ENCODE measurements at regions of chr7 and their contacts with region 1.

Region 1: GRCh38 chr7:100563809-100564400 is 9.8 kb downstream of the SAP25 start:
- DNase-seq: peak; percentile 65 to 98
- H3K4me3 ChIP-seq: no peak overlapping the region
- H3K27ac ChIP-seq: no peak overlapping the region
- H3K4me1 ChIP-seq: peaks cover 0 to 18% (median 8%) of the 10 kb centered on the region in 4 experiments; a peak in 6 of 7 replicates
- H3K27me3 ChIP-seq: no peaks in the 10 kb centered on the region
- CTCF ChIP-seq: peak in 2 of 3 experiments; percentile 82 to 96; a peak in 3 of 4 replicates
- EP300 ChIP-seq: no peak
- POLR2A ChIP-seq: no peak
- RAD21 ChIP-seq: peak; percentile 74 to 76

Region 2: DNA sequence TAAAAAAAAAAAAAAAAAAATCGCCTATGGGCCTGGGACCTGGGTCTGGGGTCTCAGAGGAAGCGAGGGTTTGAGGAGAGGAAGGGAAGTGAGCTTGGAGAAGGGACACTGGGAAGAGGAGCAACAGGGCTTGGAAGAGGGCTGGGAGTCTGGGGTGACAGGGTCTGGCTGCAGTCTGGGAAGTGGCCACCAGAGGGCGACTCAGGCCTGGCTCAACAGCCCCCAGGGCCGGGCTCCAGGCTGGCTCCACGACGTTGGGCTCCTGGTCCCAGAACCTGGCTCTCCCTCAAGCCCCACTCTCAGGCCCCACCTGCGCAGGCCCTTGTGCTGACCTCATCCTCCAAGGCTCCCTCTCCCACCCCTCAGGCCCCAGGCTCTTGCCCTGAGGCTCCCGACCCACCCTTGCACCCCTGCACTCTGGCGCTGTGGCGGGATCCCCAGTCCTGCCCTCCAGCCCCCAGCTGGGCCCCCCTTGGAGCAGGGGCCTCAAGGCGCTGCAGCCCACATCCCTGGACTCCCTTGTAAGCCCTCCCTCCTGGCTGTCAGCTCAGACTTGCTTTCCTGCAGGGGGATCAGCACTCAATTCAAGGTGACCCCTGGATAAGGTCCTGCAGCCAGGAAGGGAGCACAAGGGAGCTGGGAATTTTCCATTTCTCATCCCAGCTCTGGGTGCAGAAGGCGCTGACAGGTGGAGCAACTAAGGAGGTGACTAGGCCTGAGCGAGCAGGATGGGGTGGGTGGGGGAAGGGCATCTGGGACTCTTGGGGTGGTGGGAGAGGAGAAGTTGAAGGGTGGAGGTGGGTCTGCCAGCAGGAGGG is 94.5 kb before region 1 on chr7:
- CTCF ChIA-PET with region 1: interaction called, 149 read pairs
- POLR2A ChIA-PET with region 1: interaction called, 3 read pairs
- DNase-seq: peak in 1 of 2 experiments; percentile 99
- H3K4me3 ChIP-seq: no peak overlapping the region
- H3K27ac ChIP-seq: no peak overlapping the region
- H3K4me1 ChIP-seq: peaks cover 0 to 11% (median 4%) of the 10 kb centered on the region in 4 experiments; a peak in 6 of 7 replicates
- H3K27me3 ChIP-seq: no peaks in the 10 kb centered on the region
- CTCF ChIP-seq: peak; percentile 91 to 98 (median 97)
- EP300 ChIP-seq: no peak
- POLR2A ChIP-seq: no peak
- RAD21 ChIP-seq: peak; percentile 95 to 96

Region 3: DNA sequence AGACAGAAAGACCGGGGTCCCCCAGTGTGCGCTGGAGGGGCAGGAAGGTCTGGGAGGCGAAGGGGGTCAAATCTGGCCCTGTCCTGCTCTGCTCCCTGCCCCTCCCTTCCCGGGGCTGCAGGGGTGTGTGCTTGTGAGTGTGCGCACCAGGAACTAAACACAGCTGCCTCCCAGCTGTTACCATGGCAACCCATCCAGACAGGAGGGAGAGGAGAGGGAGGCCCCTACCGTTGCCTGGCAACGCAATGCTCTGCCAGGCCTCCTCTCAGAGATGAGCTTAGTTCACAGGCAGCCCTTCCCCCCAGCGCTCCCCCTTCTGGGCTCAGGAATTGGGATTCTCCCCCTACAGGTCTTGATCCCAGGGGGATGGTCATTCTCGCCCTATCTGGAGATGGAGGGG is 74.1 kb before region 1 on chr7:
- CTCF ChIA-PET with region 1: interaction called, 17 read pairs
- POLR2A ChIA-PET with region 1: interaction called, 7 read pairs
- DNase-seq: peak; percentile 72 to 81
- H3K4me3 ChIP-seq: no peak overlapping the region; a peak in 1 of 8 replicates
- H3K27ac ChIP-seq: no peak overlapping the region
- H3K4me1 ChIP-seq: peaks cover 2 to 26% (median 14%) of the 10 kb centered on the region in 4 experiments
- H3K27me3 ChIP-seq: peaks cover 0 to 4% (median 2%) of the 10 kb centered on the region in 4 experiments; a peak in 5 of 7 replicates
- CTCF ChIP-seq: no peak
- EP300 ChIP-seq: no peak
- POLR2A ChIP-seq: no peak
- RAD21 ChIP-seq: no peak; a peak in 1 of 4 replicates

Region 4: GRCh38 chr7:100545360-100546128 is 18.4 kb before region 1 on chr7:
- CTCF ChIA-PET with region 1: interaction called, 341 read pairs
- POLR2A ChIA-PET with region 1: interaction called, 12 read pairs
- DNase-seq: no peak
- H3K4me3 ChIP-seq: no peak overlapping the region; a peak in 1 of 8 replicates
- H3K27ac ChIP-seq: peak overlapping the region; percentile 0; the same call in 1 of the 2 replicates
- H3K4me1 ChIP-seq: peaks cover 11 to 44% (median 26%) of the 10 kb centered on the region in 4 experiments; a peak in 6 of 7 replicates
- H3K27me3 ChIP-seq: peaks cover 0 to under 1% (median under 1%) of the 10 kb centered on the region in 4 experiments; a peak in 1 of 7 replicates
- CTCF ChIP-seq: peak in 1 of 3 experiments; percentile 12; a peak in 2 of 4 replicates
- EP300 ChIP-seq: no peak
- POLR2A ChIP-seq: peak in 1 of 2 experiments; percentile 33; a peak in 1 of 3 replicates
- RAD21 ChIP-seq: no peak

Region 5: DNA sequence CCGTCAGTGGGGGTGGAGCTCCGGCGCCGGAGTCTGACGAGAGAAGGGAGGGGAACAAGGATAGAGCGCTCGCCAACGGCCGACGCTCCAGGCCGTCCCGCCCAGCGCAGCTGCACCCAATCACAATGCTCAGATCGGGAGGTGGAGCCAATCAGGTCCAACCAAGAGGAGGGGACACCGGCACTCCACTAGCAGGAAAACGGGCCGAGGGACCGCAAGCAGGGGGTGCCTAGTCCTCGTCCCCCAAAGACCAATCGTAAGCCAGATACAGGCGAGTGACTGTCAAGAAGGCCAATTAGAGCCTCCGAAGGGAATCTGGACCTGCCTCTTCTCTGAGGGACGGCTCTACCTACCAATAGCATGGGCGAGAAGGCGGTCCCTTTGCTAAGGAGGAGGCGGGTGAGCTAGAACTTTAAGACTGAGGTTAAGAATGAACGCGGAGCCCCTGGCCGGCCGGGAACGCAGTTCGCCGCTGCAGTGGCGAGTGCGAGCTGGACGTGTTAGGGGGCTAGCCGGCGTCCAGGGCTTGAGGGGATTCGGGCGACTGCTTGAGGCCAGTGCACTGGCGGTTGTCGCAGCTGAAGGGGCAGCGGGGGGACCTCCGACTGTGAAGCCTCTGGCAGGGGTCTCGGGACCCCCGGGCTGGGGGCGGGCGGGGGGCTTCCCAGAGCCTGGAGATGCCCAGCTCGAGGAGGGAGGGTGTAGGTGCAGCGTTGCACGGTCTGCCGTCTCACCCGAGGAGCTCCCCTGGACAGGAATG is 22.5 kb after region 1 on chr7 and contains the start of gene FBXO24:
- CTCF ChIA-PET with region 1: interaction called, 171 read pairs
- POLR2A ChIA-PET with region 1: interaction called, 14 read pairs
- DNase-seq: peak; percentile 99 to 100
- H3K4me3 ChIP-seq: peak within 1 kb of the TSS; percentile 80 to 88 (median 80)
- H3K27ac ChIP-seq: peak within 1 kb of the TSS; percentile 86
- H3K4me1 ChIP-seq: peaks cover 0 to 36% (median 20%) of the 10 kb centered on the region in 4 experiments; a peak in 6 of 7 replicates
- H3K27me3 ChIP-seq: peaks cover 0 to 2% (median under 1%) of the 10 kb centered on the region in 4 experiments; a peak in 3 of 7 replicates
- CTCF ChIP-seq: 0 out of 4 replicates have a peak, but pooled peaks of 1 of the 3 experiments have one; percentile 0
- EP300 ChIP-seq: no peak
- POLR2A ChIP-seq: peak in 1 of 2 experiments; percentile 47; a peak in 2 of 3 replicates
- RAD21 ChIP-seq: 0 out of 4 replicates have a peak, but pooled peaks of 1 of the 2 experiments have one; percentile 4
- total RNA-seq, gene FBXO24: 0.35 and 0.59 TPM in 2 replicates

Region 6: DNA sequence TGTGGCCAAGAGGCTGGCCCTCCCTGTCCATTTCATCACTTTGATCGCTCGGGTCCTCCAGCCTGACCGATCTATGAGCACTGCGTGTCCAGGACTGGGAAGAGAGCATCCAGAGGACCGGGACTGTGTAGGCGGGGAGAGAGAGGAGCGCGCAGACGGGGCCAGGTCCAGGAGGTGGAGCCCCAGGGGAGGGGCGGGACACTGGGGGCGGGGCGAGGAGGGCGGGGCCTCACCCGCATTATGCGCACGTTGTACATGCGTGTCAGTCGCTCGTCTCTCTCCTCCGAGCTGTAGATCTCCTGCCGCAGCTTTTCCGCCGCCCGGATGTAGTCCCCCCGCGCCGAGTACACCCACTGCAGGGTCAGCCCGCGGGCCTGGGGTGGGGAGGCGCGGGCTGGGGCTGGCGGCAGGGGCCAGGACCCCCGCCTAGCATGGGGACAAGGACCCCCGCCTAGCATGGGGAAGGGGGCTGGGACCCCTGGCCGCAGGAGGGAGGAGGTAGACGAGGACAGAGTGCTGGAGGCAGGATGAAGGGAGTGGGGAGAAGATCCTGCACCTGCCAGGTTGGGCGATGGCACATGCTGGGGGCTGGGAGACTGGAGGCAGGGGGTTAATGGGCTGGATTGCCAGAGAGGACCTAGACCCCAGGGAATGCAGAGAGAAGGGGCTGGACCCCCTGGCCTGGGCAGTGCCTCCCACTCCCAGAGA is 62.8 kb after region 1 on chr7:
- CTCF ChIA-PET with region 1: interaction called, 10 read pairs
- POLR2A ChIA-PET with region 1: no interaction called
- DNase-seq: peak in 1 of 2 experiments; percentile 79
- H3K4me3 ChIP-seq: peak overlapping the region; percentile 24 to 63 (median 28)
- H3K27ac ChIP-seq: no peak overlapping the region
- H3K4me1 ChIP-seq: peaks cover 0 to 11% (median 6%) of the 10 kb centered on the region in 4 experiments; a peak in 6 of 7 replicates
- H3K27me3 ChIP-seq: peaks cover 0 to 5% (median 2%) of the 10 kb centered on the region in 4 experiments; a peak in 3 of 7 replicates
- CTCF ChIP-seq: no peak
- EP300 ChIP-seq: no peak
- POLR2A ChIP-seq: no peak
- RAD21 ChIP-seq: no peak